Head of caudate nucleus (tissue), 42 donors: ENCODE measurements at regions of chr3 and their contacts with region 1.

Region 1: DNA sequence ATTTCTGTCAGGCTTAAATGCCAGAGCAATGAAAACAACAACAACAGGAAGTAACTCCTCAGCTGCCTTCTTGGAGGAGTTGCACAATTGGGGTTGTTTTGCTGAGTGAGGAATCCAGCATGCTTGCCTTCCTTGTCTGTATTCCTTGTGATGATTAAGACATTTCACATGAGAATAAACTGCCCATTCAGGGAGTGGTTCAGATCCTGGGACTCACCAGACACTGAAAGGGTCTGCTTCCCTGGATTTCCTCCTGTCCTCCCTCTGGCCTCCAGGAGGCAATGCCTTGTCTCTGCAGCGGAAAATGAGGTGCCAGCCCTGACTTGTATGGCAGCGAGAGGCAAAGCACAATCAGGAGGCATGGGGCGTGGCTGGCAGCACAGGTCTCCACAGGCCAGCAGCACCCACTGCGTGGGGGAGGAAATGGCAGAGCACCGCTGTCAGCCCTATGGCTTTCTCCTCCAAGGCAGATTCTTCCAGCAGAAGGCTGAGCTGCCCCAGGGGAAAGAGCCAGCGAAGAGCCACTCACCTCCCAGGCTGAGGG is 41.5 kb downstream of the RBP2 start:
- DNase-seq: no peak

Region 2: DNA sequence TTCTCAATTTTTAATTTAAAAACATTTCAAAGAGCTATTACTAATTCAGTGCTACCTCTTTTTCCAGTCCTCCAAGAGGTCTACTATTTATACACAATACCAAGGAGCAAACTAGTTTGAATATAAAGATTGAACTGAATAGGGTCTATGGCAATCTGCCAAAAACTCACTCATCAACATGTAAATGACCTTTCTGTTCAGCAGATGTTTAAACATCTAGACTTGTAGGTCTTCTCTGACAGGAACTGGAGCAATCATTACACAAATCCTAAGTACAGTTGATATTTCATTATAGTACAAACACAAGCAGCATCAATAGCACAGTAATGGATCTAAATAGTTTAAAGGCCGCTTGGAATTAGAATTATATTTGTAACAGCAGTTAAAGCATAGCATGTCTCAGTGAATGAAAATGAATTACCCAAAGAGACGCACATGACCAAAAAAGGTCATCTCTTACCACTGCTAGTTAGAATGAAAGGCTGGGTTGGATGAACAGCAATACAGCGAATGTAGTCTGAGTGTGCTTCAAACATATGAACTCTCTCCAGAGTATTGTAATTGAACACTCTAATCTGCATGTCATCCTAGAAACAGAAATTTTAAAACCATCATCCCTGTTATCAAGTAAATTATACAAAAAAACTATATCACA is 56.1 kb before region 1 on chr3:
- intact Hi-C with region 1: no loop called
- DNase-seq: no peak

Region 3: DNA sequence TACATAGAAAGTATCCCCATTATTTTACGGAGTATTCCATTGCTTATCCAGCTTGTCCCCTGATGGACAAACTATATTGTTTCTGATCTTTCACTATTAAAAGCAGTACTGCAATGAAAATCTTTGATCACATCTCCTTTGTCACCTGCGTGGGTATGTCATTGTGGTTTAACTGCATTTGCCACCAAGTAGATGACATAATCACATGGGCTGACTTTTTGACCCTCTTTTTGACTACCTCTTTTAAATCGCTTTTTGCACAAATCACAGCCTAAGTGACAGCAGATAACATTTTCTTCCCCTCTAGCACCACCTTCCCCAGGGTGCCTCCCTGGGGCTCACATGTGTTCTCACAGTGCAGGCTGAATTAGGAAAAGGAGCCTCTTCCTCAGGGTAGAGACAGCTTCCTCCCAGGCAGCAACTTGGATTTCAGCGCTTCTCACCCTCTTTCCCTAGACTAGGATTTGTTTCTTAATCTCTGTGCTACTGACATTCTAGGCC is 105.9 kb after region 1 on chr3:
- intact Hi-C with region 1: loop called (anchors 10 kb)
- DNase-seq: peak in 10 of 42 donors; percentile 28 to 53 (median 37)